ENCODE measurements at regions of chr12 and their contacts with region 1.

Region 1: GRCh38 chr12:57661376-57661775 is 28.4 kb upstream of the B4GALNT1 start:
- DNase-seq: no peak
- H3K4me3 ChIP-seq: no peak overlapping the region
- H3K27ac ChIP-seq: no peak overlapping the region
- H3K4me1 ChIP-seq: no peaks in the 10 kb centered on the region
- H3K27me3 ChIP-seq: no peaks in the 10 kb centered on the region
- CTCF ChIP-seq: no peak

Region 2: DNA sequence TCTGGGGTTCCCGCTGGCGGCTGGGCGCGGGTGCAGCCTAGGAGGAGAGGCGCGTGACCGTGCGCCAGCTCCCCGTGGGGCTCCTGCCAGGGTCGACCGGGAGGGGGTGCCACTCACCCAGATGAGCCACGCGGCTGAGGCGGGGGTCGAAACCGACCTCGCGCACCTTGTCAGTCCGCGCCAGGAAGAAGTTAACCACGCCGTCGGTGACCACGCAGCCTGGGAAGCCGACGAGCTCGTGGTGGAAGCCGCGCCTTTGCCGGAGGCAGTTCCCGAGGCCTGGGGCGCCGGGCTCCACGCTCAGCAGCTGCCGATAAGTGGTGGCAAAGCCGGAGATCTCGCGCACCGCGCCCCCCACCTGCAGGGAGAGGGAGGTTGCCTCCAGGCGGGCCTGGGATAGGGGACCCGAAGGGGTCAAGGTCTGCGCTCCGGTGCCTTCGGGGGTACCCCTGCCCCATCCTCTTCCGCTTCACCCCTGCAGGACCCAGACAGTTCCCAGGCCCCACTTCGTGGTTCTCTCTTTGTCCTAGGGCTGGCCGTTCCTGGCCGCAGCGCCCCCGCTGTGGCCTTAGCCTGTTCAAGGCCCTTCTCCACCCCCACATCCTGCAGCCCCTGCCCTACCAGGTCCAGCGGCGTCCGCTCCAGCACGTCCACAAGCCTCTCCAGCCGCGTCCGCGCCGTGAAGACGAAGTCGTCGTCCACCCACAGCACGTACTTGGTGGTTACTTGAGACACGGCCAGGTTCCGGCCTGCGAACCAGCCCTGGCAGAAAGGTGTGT is 33.7 kb before region 1 on chr12:
- CTCF ChIA-PET with region 1: interaction called, 4 read pairs
- dilution Hi-C with region 1: loop called (anchors 5 kb)
- in situ Hi-C with region 1: no loop called
- intact Hi-C with region 1: no loop called
- DNase-seq: no peak
- H3K4me3 ChIP-seq: no peak overlapping the region
- H3K27ac ChIP-seq: no peak overlapping the region
- H3K4me1 ChIP-seq: peaks cover 10% of the 10 kb centered on the region
- H3K27me3 ChIP-seq: no peaks in the 10 kb centered on the region
- CTCF ChIP-seq: no peak

Measured in mammary epithelial cell (primary cell).